ENCODE measurements at regions of chr12 and their contacts with region 1.

Region 1: DNA sequence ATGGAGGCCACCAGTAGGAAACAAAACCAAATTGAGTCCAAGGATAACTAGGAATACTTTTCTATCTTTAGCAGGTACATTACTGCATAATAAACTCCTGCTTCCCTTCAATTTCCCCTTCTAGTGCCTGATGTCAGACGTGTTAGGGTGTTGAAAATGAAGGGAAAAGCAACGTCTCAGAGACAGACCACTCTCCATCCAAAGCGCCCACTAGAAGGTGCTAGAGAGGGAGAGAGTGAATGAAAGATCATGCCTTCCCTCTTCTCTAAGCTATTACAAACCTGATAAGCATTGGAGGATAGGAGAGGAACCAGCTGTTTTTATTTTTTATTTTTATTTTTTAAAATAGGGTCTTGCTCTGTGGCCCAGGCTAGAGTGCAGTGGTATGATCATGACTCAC is 64.1 kb downstream of the ZNF641 start:
- DNase-seq: no peak
- H3K4me3 ChIP-seq: no peak overlapping the region
- H3K27ac ChIP-seq: no peak overlapping the region
- H3K4me1 ChIP-seq: no peaks in the 10 kb centered on the region
- H3K27me3 ChIP-seq: peaks cover 1 to 17% (median 11%) of the 10 kb centered on the region in 4 experiments; a peak in 5 of 7 replicates
- CTCF ChIP-seq: peak in 2 of 3 experiments; percentile 42 to 70; a peak in 2 of 4 replicates
- EP300 ChIP-seq: no peak
- POLR2A ChIP-seq: no peak
- RAD21 ChIP-seq: peak; percentile 49 to 62

Region 2: DNA sequence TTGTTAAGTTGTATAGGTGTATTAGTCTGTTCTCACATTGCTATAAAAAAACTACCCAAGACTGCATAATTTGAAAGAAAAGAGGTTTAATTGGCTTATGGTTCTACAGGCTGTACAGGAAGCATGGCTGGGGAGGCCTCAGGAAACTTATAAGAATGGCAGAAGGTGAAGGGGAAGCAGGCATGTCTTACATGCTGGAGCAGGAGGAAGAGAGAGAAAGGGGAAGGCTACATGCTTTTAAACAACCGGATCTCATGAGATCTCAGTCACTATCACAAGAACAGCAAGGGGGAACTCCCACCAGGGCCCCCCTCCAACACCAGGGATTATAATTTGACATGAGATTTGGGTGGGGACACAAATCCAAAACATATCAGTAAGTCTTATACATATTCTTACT is 23.0 kb before region 1 on chr12:
- CTCF ChIA-PET with region 1: no interaction called
- POLR2A ChIA-PET with region 1: no interaction called
- DNase-seq: no peak
- H3K4me3 ChIP-seq: no peak overlapping the region
- H3K27ac ChIP-seq: no peak overlapping the region
- H3K4me1 ChIP-seq: no peaks in the 10 kb centered on the region
- H3K27me3 ChIP-seq: no peaks in the 10 kb centered on the region
- CTCF ChIP-seq: no peak
- EP300 ChIP-seq: no peak
- POLR2A ChIP-seq: no peak
- RAD21 ChIP-seq: no peak

Region 3: GRCh38 chr12:48296586-48297282 is 10.1 kb after region 1 on chr12:
- CTCF ChIA-PET with region 1: interaction called, 17 read pairs
- POLR2A ChIA-PET with region 1: no interaction called
- DNase-seq: peak; percentile 47 to 70
- H3K4me3 ChIP-seq: peak overlapping the region; percentile 36 to 63 (median 49)
- H3K27ac ChIP-seq: no peak overlapping the region
- H3K4me1 ChIP-seq: no peaks in the 10 kb centered on the region; a peak in 1 of 7 replicates
- H3K27me3 ChIP-seq: no peaks in the 10 kb centered on the region
- CTCF ChIP-seq: no peak
- EP300 ChIP-seq: no peak
- POLR2A ChIP-seq: peak in 1 of 2 experiments; percentile 32; a peak in 1 of 3 replicates
- RAD21 ChIP-seq: no peak